Activated naive CD4-positive, alpha-beta T cell treated with anti-CD3 and anti-CD28 coated beads for 36 hours (primary cell): ENCODE measurements at regions of chr11 and their contacts with region 1.

Region 1: DNA sequence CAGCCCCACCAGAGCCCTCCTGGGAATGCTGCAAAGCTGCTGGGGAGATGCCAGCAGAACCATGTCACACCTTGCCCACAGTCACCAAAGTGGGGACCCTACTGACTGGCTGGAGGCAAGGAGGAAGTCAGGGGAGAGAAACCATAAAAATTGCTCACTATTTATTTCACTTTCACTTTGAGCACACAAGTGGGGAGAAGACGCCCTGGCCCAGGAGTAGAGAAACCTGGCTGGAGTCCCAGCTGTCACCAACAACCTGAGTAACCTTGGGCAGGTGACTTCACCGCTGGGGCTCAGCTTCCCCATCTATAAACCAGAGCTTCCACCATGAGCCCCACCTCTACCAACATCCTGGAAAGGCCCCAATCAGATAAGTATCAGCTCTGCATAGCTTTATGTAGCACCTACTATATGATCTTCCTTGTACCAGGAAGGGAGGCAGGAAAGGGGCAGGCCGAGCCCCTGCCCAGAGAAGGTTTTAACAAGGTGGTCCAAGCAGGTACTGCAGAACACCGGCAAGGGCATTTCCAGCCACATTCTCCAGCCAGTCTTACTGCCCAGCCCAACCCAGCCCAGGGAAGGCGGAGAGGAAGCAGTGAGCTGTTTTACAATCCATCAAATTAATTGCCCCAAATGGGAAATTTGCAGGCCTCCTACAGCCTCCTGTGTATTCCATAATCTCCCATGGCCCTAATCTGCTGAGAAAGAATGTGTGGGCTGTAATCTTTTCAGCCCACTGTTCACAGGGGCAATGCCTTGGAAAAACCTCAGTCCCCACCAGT is 27.6 kb downstream of the PLEKHA7 start:
- DNase-seq: peak; percentile 82
- H3K4me3 Mint-ChIP-seq: no peak overlapping the region
- H3K27ac Mint-ChIP-seq: no peak overlapping the region
- H3K4me1 Mint-ChIP-seq: peaks cover 26% of the 10 kb centered on the region
- H3K27me3 Mint-ChIP-seq: no peaks in the 10 kb centered on the region

Region 2: GRCh38 chr11:16862746-16863145 is 123.9 kb before region 1 on chr11:
- CTCF ChIA-PET with region 1: no interaction called
- intact Hi-C with region 1: loop called (anchors 1 kb)
- DNase-seq: no peak
- H3K4me3 Mint-ChIP-seq: no peak overlapping the region
- H3K27ac Mint-ChIP-seq: no peak overlapping the region
- H3K4me1 Mint-ChIP-seq: peaks cover 16% of the 10 kb centered on the region
- H3K27me3 Mint-ChIP-seq: peaks cover 2% of the 10 kb centered on the region

Region 3: DNA sequence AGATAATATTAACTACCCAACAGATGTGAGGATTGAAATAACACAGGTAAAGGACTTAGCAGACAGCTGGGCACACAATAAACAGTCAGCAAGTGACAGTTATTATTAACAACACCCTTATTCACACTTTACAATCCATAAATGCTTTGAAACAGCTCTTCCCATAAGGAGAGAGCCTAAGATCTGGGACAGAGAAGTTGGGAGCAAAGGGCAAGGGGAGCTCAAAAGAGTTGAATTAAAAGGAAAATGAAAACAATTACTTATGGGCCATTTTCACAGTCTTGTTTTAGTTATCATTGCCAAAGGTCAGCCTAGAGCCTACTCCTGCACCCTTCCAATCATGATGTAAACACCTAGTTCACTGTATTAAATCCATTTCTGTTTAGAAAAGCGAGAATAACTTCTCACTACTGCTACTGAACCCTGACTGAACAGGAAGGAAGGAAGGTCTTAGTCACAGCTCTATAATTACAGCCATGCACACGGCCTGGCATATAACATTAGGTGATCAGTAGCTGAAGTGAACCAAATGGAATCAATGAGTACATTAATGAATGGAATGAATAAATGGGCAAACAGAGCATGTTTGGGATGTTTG is 83.7 kb before region 1 on chr11:
- CTCF ChIA-PET with region 1: no interaction called
- intact Hi-C with region 1: loop called (anchors 1 kb)
- DNase-seq: peak; percentile 30
- H3K4me3 Mint-ChIP-seq: peak overlapping the region; percentile 3
- H3K27ac Mint-ChIP-seq: peak overlapping the region; percentile 92
- H3K4me1 Mint-ChIP-seq: peaks cover 43% of the 10 kb centered on the region
- H3K27me3 Mint-ChIP-seq: no peaks in the 10 kb centered on the region

Region 4: GRCh38 chr11:16945671-16946469 is 40.8 kb before region 1 on chr11:
- CTCF ChIA-PET with region 1: no interaction called
- intact Hi-C with region 1: loop called (anchors 2 kb)
- DNase-seq: peak; percentile 70
- H3K4me3 Mint-ChIP-seq: no peak overlapping the region
- H3K27ac Mint-ChIP-seq: no peak overlapping the region
- H3K4me1 Mint-ChIP-seq: peaks cover 3% of the 10 kb centered on the region
- H3K27me3 Mint-ChIP-seq: no peaks in the 10 kb centered on the region

Region 5: GRCh38 chr11:17014838-17015626 is 28.4 kb after region 1 on chr11:
- CTCF ChIA-PET with region 1: interaction called, 4 read pairs
- intact Hi-C with region 1: loop called (anchors 1 kb)
- DNase-seq: peak; percentile 34
- H3K4me3 Mint-ChIP-seq: peak overlapping the region; percentile 81
- H3K27ac Mint-ChIP-seq: peak overlapping the region; percentile 14
- H3K4me1 Mint-ChIP-seq: peaks cover 3% of the 10 kb centered on the region
- H3K27me3 Mint-ChIP-seq: peaks cover 18% of the 10 kb centered on the region

Region 6: DNA sequence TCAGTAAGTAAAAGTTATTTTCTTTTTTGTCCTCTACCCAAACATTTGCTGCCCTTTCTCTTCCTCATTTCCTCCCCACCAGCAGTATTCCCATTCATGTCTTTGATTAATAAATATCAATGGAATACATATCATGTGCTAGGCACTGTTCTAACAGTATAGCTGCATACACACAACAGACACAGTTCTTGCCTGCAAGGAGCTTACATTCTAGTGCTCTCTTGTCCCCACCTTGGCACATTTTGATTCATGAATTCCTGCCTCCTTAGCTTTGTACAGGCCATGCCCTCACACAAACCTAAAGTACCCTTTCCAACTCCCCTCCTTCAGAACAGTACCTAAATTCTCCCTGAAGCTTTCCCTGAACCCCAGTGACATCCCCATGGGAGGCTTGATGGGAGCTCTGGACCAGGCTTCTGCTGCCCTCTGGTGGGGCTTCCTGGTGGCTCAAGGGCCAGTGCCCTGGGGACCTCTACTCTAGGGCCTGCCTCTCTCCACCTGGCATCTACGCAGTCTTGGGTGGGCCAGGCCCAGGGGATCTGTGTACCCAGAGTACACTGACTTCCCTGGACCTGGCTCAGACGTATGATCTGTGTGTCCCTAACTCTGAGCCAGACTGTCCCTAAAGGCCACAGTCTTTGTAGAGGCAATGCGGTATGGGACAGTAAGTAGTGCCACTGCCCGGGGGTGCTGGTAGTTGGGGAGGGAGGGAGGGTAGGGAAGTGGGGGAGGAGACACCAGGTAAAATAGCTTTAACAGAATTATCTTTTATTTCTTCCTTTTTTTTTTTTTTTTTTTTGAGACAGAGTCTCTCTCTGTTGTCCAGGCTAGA is 76.8 kb after region 1 on chr11:
- CTCF ChIA-PET with region 1: interaction called, 11 read pairs
- intact Hi-C with region 1: no loop called
- DNase-seq: peak; percentile 74
- H3K4me3 Mint-ChIP-seq: no peak overlapping the region
- H3K27ac Mint-ChIP-seq: no peak overlapping the region
- H3K4me1 Mint-ChIP-seq: no peaks in the 10 kb centered on the region
- H3K27me3 Mint-ChIP-seq: no peaks in the 10 kb centered on the region

Region 7: DNA sequence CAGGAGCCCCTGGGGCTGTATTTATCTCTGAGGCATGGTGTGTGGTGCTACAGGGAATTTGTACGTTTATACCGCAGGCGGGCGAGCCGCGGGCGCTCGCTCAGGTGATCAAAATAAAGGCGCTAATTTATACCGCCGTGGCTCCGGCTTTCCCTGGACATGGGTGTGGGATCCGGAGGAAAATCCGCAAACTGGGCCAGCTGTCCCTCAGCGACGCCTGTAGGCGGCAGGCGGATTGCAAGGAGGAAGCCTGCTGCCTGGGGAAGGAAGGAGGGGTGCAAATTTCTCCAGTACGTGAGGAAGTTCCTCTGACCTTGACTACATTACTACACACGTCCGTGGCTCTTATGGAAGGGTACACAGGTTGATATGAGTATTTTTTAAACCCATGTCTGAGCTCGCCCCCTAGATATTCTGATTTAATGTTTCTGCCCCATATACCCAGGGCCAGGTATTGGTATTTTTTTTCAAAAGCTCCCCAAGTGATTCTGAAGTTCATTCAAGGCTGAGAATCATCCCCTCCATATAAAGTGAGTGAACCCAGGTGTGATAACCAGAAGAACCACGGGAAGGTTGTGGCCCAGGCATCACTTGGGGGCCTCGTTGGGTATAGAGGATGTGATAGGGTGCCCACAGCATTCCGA is 735.5 kb after region 1 on chr11:
- CTCF ChIA-PET with region 1: no interaction called
- intact Hi-C with region 1: no loop called
- DNase-seq: no peak
- H3K4me3 Mint-ChIP-seq: no peak overlapping the region
- H3K27ac Mint-ChIP-seq: no peak overlapping the region
- H3K4me1 Mint-ChIP-seq: no peaks in the 10 kb centered on the region
- H3K27me3 Mint-ChIP-seq: peaks cover 38% of the 10 kb centered on the region

Region 8: GRCh38 chr11:18229501-18229900 is 1242.9 kb after region 1 on chr11:
- CTCF ChIA-PET with region 1: no interaction called
- intact Hi-C with region 1: no loop called
- DNase-seq: no peak
- H3K4me3 Mint-ChIP-seq: no peak overlapping the region
- H3K27ac Mint-ChIP-seq: no peak overlapping the region
- H3K4me1 Mint-ChIP-seq: no peaks in the 10 kb centered on the region
- H3K27me3 Mint-ChIP-seq: peaks cover 7% of the 10 kb centered on the region